ENCODE measurements at regions of chr1 and their contacts with region 1.

Region 1: GRCh38 chr1:87328272-87329050 is at the start of gene LMO4:
- DNase-seq: peak; percentile 97
- ATAC-seq: peak; percentile 75
- H3K4me3 ChIP-seq: peak within 1 kb of the TSS; percentile 80
- H3K27ac ChIP-seq: peak within 1 kb of the TSS; percentile 43
- H3K4me1 ChIP-seq: peaks cover 25% of the 10 kb centered on the region
- H3K27me3 ChIP-seq: no peaks in the 10 kb centered on the region
- CTCF ChIP-seq: no peak
- total RNA-seq, gene LMO4: 35.7 and 41.5 TPM in 2 replicates

Region 2: GRCh38 chr1:87379306-87379705 is 50.8 kb after region 1 on chr1:
- CTCF ChIA-PET with region 1: no interaction called
- POLR2A ChIA-PET with region 1: no interaction called
- intact Hi-C with region 1: no loop called
- DNase-seq: no peak
- ATAC-seq: no peak
- H3K4me3 ChIP-seq: no peak overlapping the region
- H3K27ac ChIP-seq: no peak overlapping the region
- H3K4me1 ChIP-seq: no peaks in the 10 kb centered on the region
- H3K27me3 ChIP-seq: no peaks in the 10 kb centered on the region
- CTCF ChIP-seq: no peak

Region 3: DNA sequence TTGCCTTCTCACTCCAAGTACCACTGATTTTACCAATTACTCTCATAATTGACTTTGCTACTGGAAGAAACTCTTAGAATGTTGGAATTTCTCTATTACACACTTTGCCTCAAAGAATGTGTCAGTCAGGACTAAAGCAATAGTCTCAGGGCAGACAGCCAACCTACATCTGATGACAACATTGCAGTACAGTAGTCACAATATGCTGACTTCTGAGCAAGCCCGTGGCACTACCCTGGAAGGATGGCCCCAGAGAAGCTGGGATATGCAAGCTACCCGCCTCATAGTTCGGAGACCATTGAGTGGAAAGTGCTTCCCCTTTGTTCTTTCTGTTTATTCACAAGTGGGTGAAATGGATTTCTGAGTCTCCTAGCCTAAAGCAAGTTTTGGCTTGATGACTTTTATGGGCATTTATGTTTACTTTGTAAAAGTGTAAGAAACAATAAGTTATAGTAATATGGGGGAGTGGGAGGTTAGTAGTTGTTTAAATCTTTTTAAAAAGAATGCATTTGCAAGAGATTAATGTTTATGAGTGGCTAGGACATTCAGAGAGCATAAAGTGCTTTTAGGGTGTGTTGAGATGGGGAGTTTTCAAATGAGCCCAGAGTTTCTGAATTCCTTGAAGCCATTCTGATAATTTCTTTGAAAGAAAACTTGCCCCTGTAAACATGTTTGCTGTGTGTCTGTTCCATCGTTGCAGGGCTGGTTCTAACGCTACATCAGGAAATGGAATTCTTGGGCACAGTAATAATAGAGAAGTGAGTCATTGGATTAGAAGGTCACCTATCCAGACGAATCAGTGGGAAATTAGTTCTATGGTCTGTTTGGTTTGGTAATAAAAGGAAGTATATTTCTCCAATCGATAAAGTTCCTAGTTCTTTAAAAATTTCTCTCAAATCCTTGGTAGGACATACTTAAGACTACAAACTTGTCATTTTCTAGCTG is 64.1 kb after region 1 on chr1:
- CTCF ChIA-PET with region 1: no interaction called
- POLR2A ChIA-PET with region 1: no interaction called
- intact Hi-C with region 1: loop called (anchors 2 kb)
- DNase-seq: peak; percentile 89
- ATAC-seq: peak; percentile 92
- H3K4me3 ChIP-seq: peak overlapping the region; percentile 42
- H3K27ac ChIP-seq: peak overlapping the region; percentile 82
- H3K4me1 ChIP-seq: peaks cover 21% of the 10 kb centered on the region
- H3K27me3 ChIP-seq: no peaks in the 10 kb centered on the region
- CTCF ChIP-seq: no peak; the same call in 1 of the 2 replicates

Region 4: DNA sequence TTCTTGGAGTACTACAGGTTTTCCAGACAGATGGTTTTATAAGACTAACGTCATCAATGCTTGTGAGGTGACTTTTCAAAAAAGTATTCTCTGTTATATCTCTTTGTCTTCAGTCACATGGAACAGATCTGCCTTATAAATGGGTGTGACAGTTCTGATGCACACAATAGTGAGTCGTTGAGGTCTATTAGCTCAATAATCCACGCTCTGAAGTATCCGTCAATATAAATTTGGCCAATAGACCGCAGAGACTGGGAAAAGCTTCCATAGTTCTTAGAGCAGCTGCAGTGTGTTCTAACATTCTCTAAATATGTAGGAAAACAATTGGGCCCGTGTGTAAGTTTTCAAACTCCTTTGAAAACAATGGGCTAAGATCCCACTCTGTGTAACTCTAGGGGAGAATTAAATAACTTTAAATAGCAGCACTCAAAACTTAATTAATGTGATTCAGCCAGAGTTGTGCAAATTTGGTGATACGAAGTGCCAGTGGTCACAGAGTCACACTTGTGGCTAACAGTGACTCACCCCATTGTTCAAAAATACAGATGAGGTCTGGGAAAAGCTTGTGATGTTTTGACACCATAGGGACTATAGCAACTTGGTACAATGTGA is 316.2 kb after region 1 on chr1:
- CTCF ChIA-PET with region 1: no interaction called
- POLR2A ChIA-PET with region 1: no interaction called
- intact Hi-C with region 1: loop called (anchors 5 kb)
- DNase-seq: peak; percentile 84
- ATAC-seq: peak; percentile 82
- H3K4me3 ChIP-seq: no peak overlapping the region
- H3K27ac ChIP-seq: peak overlapping the region; percentile 93
- H3K4me1 ChIP-seq: peaks cover 29% of the 10 kb centered on the region
- H3K27me3 ChIP-seq: no peaks in the 10 kb centered on the region
- CTCF ChIP-seq: no peak

Region 5: DNA sequence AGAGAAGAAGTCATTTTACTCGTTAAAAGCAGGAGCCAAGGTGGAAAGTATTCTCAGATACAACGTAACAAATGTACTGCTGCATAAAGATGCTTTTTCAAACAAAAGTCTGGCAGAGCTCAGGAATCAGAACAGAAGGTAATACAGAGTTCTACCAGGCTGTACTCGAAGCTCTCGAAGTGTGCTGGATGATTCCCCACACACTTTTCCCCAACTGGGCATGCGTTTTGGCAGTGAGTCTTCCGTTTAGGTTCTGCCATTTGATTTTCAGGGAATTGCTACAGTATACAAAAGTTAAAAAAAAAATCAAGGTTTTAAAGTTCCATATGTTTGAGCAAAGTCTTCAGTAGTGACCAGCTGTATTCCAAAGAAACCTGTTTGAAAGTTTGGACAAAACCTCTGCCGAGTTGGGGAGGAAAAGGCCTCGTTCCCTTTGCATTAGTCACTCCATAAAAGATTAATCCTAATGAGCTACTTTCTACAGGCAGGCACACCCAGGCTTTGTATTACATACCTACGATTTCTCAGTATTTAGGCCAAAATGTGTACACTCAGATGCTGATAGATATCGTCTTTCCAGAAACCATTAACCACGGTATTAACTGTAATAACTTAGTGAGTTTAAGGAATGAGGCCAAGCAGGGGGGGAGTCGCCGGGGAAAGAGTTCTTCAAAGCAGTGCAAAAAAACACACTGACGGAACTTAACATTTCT is 477.4 kb after region 1 on chr1:
- CTCF ChIA-PET with region 1: no interaction called
- POLR2A ChIA-PET with region 1: no interaction called
- intact Hi-C with region 1: loop called (anchors 10 kb)
- DNase-seq: peak; percentile 91
- ATAC-seq: peak; percentile 96
- H3K4me3 ChIP-seq: peak overlapping the region; percentile 50
- H3K27ac ChIP-seq: peak overlapping the region; percentile 23
- H3K4me1 ChIP-seq: peaks cover 22% of the 10 kb centered on the region
- H3K27me3 ChIP-seq: no peaks in the 10 kb centered on the region
- CTCF ChIP-seq: no peak

Region 6: GRCh38 chr1:88061492-88062177 is 733.2 kb after region 1 on chr1:
- CTCF ChIA-PET with region 1: no interaction called
- POLR2A ChIA-PET with region 1: no interaction called
- intact Hi-C with region 1: loop called (anchors 5 kb)
- DNase-seq: peak; percentile 84
- ATAC-seq: peak; percentile 89
- H3K4me3 ChIP-seq: no peak overlapping the region
- H3K27ac ChIP-seq: no peak overlapping the region
- H3K4me1 ChIP-seq: peaks cover 27% of the 10 kb centered on the region
- H3K27me3 ChIP-seq: no peaks in the 10 kb centered on the region
- CTCF ChIP-seq: peak; percentile 95